WTC11 (cell line): ENCODE measurements at regions of chr3 and their contacts with region 1.

Region 1: DNA sequence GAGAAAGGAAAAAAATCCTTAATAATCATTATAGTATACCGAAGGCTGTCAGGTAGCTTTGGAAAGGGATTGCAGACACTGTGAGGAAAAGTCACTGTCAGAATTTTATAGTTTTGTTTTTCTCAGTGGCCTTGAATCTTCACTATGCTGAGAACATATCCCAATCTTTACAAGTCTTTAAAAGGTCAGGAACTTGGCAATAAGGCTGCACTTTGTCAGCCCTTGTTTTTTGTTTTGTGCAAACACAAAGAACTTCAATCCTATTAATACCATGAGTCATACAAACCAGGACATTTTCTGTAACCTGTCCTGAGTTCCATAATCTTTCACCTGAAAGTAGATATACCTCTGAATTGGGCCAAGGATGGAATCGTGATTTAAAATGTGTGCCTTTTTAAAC is 45.6 kb upstream of the PIK3R4 start:
- DNase-seq: no peak
- ATAC-seq: no peak
- H3K4me3 Mint-ChIP-seq: no peak overlapping the region
- H3K27ac Mint-ChIP-seq: no peak overlapping the region
- H3K4me1 Mint-ChIP-seq: peaks cover 23% of the 10 kb centered on the region
- H3K27me3 Mint-ChIP-seq: no peaks in the 10 kb centered on the region
- CTCF ChIP-seq: no peak

Region 2: GRCh38 chr3:130725746-130726145 is 66.5 kb before region 1 on chr3:
- CTCF ChIA-PET with region 1: no interaction called
- POLR2A ChIA-PET with region 1: interaction called, 11 read pairs
- DNase-seq: no peak
- ATAC-seq: no peak
- H3K4me3 Mint-ChIP-seq: no peak overlapping the region
- H3K27ac Mint-ChIP-seq: no peak overlapping the region
- H3K4me1 Mint-ChIP-seq: peaks cover 6% of the 10 kb centered on the region; the same call in 1 of the 2 replicates
- H3K27me3 Mint-ChIP-seq: no peaks in the 10 kb centered on the region
- CTCF ChIP-seq: no peak

Region 3: DNA sequence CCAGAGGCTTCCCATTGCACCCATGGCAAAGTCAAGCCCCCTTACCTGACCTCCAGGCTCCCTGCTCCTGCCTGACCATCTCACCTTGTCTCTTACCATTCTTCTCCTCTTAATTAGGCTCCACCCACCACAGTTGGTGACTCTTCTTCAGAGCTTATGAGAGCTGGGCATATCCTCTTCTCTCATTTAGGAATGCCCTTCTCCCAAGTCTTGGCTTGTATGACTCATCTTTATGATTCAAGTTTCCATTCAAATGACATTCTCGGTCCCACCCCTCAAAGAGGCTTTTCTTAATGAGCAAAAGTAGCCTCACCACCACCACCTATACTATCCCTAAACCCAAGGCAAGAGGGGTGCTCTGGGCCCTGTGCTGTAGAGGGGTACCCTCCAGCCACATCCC is 534.1 kb after region 1 on chr3:
- CTCF ChIA-PET with region 1: no interaction called
- POLR2A ChIA-PET with region 1: no interaction called
- DNase-seq: no peak
- ATAC-seq: no peak
- H3K4me3 Mint-ChIP-seq: no peak overlapping the region
- H3K27ac Mint-ChIP-seq: no peak overlapping the region
- H3K4me1 Mint-ChIP-seq: peaks cover 25% of the 10 kb centered on the region
- H3K27me3 Mint-ChIP-seq: no peaks in the 10 kb centered on the region
- CTCF ChIP-seq: no peak